Ascending aorta (tissue), 2 donors: ENCODE measurements at regions of chr20 and their contacts with region 1.

Region 1: GRCh38 chr20:11108102-11108810 is 434.5 kb upstream of the JAG1 start:
- DNase-seq: peak in 1 of 2 donors; percentile 67
- H3K4me3 ChIP-seq: no peak overlapping the region
- H3K27ac ChIP-seq: peak overlapping the region in 1 of 2 donors; percentile 26
- H3K4me1 ChIP-seq: peaks cover 3 to 9% of the 10 kb centered on the region in 2 donors
- H3K27me3 ChIP-seq: no peaks in the 10 kb centered on the region
- CTCF ChIP-seq: no peak

Region 2: DNA sequence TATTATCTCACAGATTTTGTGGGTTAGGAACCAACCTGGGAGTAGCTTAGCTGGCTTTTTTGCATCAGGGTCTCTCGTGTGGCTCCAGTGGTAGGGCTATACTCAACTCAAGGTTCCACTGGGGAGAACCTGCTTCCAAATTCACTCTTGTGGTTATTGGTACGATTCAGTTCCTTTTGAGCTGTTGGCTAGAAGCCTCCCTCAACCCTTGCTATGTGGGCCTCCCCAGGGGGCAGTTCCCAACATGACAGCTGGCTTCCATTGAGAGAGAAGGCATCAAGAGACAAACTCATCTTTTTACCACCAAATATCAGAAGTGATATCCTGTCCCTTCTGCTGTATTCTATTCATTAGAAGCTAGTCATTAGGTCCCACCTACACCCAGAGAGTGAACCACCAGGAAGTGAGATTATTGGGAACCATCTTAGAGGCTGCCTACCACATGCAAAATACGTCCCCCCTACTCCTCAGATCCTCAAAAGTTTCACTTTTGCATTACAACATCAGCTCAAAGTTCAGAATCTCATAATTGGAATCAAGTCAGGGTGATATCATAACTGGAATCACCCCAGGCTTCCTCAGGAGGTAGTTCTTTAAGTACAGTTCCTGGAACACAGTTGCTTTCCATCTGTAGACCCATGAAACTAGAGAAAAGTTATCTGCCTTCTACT is 705.2 kb before region 1 on chr20:
- intact Hi-C with region 1: no loop called
- DNase-seq: no peak
- H3K4me3 ChIP-seq: no peak overlapping the region
- H3K27ac ChIP-seq: no peak overlapping the region
- H3K4me1 ChIP-seq: no peaks in the 10 kb centered on the region
- H3K27me3 ChIP-seq: no peaks in the 10 kb centered on the region
- CTCF ChIP-seq: no peak

Region 3: GRCh38 chr20:11047559-11047958 is 60.7 kb before region 1 on chr20:
- intact Hi-C with region 1: no loop called
- DNase-seq: no peak
- H3K4me3 ChIP-seq: no peak overlapping the region
- H3K27ac ChIP-seq: no peak overlapping the region
- H3K4me1 ChIP-seq: no peaks in the 10 kb centered on the region
- H3K27me3 ChIP-seq: no peaks in the 10 kb centered on the region
- CTCF ChIP-seq: no peak

Region 4: DNA sequence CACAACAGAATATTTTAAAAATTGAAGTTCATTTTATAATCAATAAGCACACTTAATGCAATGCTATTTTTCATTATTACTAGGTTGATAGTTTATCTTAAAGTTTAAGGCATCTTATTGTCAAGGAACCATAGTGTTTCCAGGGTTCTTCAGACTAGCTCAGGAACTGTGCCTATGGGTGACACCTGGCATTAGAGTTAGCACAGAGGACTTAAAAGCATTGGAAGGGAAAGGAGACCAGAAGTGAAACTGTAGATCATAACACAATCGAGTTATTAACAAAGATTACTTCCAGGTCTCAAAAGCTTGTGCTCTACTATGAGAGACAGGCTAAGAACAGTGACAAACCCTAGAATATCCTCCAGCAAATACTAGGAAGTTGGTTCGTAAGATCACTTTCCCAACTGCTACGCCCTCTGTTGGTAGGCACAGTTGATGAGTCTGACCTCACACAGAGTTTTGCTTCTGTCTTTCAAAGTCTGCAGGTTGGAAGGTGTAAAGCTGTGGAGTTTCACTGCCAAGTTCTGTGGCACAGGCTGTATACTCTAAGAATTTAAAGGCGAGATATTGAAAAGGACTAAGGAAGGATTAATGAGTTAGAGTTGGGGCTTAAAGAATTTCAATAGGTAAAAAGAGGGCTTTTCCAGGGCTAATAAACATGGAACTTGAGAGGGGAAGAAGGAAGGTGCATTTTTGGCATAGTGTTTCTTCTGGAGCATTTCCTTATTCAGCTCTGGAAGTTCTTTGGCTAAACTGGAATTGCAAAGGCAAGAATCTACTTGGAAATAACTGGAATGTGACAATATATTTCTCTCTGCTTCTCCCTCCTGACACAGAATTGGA is 96.9 kb after region 1 on chr20:
- intact Hi-C with region 1: loop called (anchors 5 kb)
- DNase-seq: peak in 1 of 2 donors; percentile 68
- H3K4me3 ChIP-seq: no peak overlapping the region
- H3K27ac ChIP-seq: peak overlapping the region; percentile 3 to 38
- H3K4me1 ChIP-seq: peaks cover 0 to 10% of the 10 kb centered on the region in 2 donors
- H3K27me3 ChIP-seq: no peaks in the 10 kb centered on the region
- CTCF ChIP-seq: peak; percentile 59 to 72 (median 59)